Heart right ventricle (tissue), 16 donors: ENCODE measurements at regions of chr4 and their contacts with region 1.

Region 1: DNA sequence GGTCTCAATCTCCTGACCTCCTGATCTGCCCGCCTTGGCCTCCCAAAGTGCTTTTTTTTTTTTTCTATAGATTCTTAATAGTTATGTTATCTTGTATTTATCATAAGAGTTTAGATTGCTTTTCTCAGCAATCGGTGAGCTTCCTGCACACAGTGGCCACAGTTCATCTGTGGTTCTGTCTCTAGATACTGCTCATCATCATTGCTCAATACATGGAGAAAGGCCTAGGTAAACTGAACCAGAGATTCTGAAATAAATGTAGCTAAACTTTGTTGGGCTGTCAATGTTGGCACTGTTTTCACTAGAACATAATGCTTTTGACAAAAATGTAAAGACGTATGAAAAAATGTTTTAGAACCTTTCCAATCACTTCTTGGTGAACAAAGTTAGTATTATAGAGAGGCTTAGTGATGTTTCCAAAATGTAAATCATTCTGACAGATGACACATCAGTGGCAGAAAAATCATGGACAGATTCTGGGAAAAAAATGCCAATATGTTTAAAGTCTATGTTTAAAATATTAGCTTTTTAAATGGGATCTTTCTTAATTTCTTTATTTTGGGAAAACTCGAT is 50.0 kb upstream of the LIMCH1 start:
- DNase-seq: no peak
- ATAC-seq: no peak
- H3K4me3 ChIP-seq: no peak overlapping the region
- H3K27ac ChIP-seq: no peak overlapping the region
- H3K4me1 ChIP-seq: peaks cover 0 to 33% (median 23%) of the 10 kb centered on the region in 9 donors
- H3K27me3 ChIP-seq: no peaks in the 10 kb centered on the region
- CTCF ChIP-seq: no peak

Region 2: GRCh38 chr4:41505161-41505661 is 17.3 kb after region 1 on chr4:
- intact Hi-C with region 1: loop called in 1 of 10 experiments (anchors 2 kb)
- DNase-seq: no peak
- ATAC-seq: peak in 7 of 8 donors; percentile 59 to 91 (median 77)
- H3K4me3 ChIP-seq: no peak overlapping the region
- H3K27ac ChIP-seq: peak overlapping the region in 6 of 10 donors; percentile 13 to 68 (median 34)
- H3K4me1 ChIP-seq: peaks cover 0 to 47% (median 23%) of the 10 kb centered on the region in 9 donors
- H3K27me3 ChIP-seq: no peaks in the 10 kb centered on the region
- CTCF ChIP-seq: no peak